ENCODE measurements at regions of chr1 and their contacts with region 1.

Region 1: DNA sequence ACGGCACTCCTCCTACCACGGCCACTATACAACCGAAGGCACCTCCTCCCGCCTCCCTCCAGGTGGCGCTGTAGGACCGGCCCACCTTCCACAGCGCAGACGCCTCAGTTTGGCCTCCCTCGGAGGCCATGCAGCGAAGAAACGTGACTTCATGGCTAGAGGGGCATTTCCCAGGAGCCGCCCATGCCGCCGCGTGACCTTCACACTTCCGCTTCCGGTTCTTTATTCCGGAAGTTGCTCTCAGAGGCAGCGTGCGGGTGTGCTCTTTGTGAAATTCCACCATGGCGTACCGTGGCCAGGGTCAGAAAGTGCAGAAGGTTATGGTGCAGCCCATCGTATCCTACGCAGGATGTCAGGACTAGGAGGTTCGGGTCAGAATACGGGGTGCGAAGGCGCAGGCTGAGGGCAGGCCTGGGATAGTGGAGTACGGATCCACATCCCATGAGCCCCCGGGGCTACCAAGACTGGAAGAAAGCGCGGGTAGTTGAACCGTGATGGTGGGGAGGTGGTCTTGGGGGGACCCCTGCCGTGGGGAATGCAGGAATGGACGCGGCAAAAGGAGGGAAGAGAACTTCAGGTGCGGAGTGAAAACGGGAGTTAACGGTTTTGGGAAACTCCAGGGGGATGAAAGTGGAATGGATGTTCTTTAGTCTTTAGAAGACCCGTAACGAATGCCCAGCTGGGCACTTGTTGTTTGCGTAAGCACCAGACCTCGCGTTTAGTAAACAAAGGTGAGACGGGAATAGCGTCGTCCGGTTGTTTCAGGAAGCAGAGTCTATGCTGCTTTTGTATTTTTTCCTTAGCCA is at the start of gene SNRPE:
- DNase-seq: peak; percentile 96
- H3K4me3 Mint-ChIP-seq: peak within 1 kb of the TSS; percentile 100
- H3K27ac Mint-ChIP-seq: peak within 1 kb of the TSS; percentile 98
- H3K4me1 Mint-ChIP-seq: peaks cover 25% of the 10 kb centered on the region
- H3K27me3 Mint-ChIP-seq: no peaks in the 10 kb centered on the region
- total RNA-seq, gene SNRPE: 250 and 270 TPM in 2 replicates

Region 2: DNA sequence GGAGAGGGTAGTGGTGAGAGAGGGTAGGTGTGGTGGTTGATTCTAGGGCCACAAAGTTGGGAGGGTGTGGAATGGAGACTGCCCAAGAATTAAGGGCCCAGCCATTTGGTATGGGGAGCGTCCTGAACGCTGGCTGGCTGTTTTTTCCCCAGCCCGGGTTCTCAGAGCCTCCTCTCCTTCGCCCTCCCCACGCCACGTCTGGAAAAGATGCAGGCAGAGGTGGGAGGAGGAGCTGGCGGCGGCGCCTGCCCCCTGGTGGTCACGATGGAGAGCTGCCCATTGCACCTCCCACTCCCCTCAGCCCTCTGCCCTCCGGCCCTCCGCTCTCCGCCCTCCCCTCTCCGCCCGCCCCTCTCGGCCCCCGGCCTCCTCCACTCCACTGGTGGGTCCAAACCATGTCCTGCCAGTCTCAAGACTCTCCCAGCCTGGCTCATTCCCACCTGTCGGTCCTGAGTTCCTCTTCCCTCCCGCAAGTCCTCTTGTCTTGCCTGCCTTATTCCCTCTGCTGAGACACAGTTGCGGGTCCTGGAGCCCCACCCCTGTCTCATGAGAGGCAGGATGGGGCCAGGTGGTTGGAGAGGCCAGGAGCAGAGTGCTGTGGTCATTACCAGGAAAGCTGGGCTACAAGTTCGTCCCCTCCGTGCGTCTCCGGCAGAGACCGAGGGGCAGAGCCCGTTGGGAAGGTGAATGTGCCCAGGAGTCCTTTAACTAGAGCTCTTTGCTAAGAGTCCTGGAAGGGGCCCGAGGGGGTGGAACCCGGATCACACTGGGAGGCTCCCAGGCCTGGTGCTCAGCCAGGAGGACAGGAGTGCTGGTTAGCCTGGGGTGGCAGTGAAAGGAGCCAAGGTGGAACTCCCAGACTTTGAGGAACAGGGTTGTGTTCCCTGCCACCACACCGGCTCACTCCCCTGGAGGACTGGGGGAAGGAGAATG is 267.6 kb after region 1 on chr1:
- intact Hi-C with region 1: loop called (anchors 1 kb)
- DNase-seq: peak; percentile 44
- H3K4me3 Mint-ChIP-seq: no peak overlapping the region
- H3K27ac Mint-ChIP-seq: peak overlapping the region; percentile 58
- H3K4me1 Mint-ChIP-seq: peaks cover 8% of the 10 kb centered on the region
- H3K27me3 Mint-ChIP-seq: peaks cover 3% of the 10 kb centered on the region

Region 3: DNA sequence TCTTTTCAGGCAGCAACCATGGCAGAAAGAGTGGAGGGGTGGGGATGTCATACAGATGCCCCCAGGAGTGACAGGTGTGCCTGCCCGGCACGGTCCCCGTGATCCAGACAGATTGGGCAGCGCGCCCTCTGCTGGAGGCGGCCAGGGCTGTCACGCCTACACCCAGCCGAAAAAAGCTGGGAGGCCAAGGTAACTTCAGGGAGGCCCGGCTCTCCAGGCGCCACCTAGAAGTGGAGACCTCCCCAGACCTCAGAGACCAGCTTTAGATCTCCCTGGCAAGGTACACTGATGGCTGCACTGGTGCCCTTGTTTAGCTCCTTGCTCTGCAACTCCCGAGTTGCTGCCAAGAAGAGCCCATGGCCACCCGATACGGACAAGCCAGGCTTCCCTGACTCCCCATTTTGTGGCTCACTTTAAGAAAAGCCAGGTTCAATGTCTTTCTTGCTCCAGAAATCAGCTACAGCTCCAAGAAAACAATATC is 345.6 kb after region 1 on chr1:
- intact Hi-C with region 1: loop called (anchors 1 kb)
- DNase-seq: peak; percentile 51
- H3K4me3 Mint-ChIP-seq: no peak overlapping the region
- H3K27ac Mint-ChIP-seq: no peak overlapping the region
- H3K4me1 Mint-ChIP-seq: peaks cover 5% of the 10 kb centered on the region
- H3K27me3 Mint-ChIP-seq: peaks cover 41% of the 10 kb centered on the region

Region 4: GRCh38 chr1:204368996-204369726 is 507.6 kb after region 1 on chr1:
- intact Hi-C with region 1: no loop called
- DNase-seq: no peak
- H3K4me3 Mint-ChIP-seq: no peak overlapping the region
- H3K27ac Mint-ChIP-seq: no peak overlapping the region
- H3K4me1 Mint-ChIP-seq: peaks cover 27% of the 10 kb centered on the region
- H3K27me3 Mint-ChIP-seq: peaks cover 16% of the 10 kb centered on the region

Region 5: DNA sequence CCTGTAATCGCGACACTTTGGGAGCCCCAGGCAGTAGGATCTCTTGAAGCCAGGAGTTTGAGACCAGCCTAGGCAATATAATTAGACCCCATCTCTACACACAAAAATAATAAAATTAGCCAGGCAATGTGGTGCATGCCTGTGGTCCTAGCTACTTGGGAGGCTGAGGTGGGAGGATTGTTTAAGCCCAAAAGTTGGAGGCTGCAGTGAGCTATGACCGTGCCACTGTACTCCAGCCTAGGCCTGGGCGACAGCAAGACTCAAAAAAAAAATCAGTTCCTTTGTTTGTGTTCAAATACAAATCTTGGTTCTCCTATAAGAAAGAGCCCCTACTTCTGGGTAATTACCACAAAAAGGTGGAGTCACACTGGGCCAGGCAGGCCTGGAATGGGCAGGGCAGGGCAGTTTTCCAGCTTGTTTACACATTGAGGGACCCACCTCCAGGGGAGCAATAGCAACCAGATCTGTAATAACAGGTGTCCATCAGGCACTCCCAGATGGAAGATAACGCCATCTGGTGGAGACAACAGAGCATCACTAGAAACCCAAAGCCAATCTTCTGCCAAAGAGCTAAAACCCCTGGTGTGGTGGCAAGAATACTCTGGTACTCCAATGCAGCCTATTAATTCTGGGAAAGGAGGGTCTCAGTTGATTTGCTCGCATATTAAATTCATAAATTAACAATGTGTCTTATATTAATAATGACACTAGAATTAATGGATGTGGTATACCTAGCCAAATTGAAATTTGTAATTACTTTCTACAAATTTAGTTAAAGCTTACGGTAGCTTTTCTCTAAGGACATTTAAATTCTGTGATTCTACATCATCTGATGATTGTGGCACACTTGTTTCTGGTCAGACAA is 536.9 kb after region 1 on chr1:
- intact Hi-C with region 1: loop called (anchors 5 kb)
- DNase-seq: peak; percentile 30
- H3K4me3 Mint-ChIP-seq: no peak overlapping the region
- H3K27ac Mint-ChIP-seq: peak overlapping the region; percentile 50
- H3K4me1 Mint-ChIP-seq: peaks cover 8% of the 10 kb centered on the region
- H3K27me3 Mint-ChIP-seq: no peaks in the 10 kb centered on the region

Region 6: DNA sequence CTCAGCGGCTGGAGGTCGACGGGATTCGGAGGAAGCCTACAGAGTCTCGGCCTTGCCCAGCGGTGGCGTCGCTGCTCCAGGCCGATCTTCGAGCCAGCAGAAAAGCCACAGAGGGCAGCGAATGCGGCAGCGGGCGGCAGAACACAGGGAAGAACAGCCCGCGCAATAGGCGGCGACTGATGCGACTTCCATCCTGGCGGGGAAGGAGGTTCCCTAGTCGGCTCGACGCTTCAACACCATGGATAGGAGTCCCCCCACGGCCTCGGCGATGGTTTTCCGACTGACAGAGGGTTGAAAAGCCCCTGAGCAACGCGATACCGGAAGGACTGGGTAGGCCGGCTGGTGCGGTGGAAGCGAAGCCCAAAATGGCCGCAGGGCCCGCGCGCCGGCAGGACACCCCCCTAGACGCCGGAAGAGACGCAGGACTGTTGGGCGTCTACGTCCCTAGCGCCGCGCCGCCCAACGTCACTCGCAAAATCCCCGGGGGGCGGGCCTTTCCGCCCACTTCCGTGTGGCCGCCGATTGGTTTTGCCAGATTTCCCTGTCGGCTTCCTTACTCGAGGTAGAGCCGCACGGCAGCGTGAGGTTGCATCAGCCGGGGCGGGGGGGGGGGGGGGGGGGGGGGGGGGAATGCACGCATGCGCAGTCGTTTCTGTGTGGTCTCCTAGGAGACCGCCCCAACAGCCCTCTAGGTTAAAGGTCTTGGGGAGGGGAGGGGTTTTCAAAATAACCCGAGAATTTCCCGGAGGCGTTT is 550.0 kb after region 1 on chr1 and contains the start of gene PPP1R15B:
- intact Hi-C with region 1: loop called (anchors 2 kb)
- DNase-seq: peak; percentile 98
- H3K4me3 Mint-ChIP-seq: peak within 1 kb of the TSS; percentile 99
- H3K27ac Mint-ChIP-seq: peak within 1 kb of the TSS; percentile 99
- H3K4me1 Mint-ChIP-seq: peaks cover 12% of the 10 kb centered on the region
- H3K27me3 Mint-ChIP-seq: no peaks in the 10 kb centered on the region
- total RNA-seq, gene PPP1R15B: 75.8 and 76.2 TPM in 2 replicates

Measured in activated T-helper 1 cell treated with anti-CD3 and anti-CD28 coated beads, Interleukin-12 subunit alpha, Interleukin-12 subunit beta, Interleukin-2, Interleukin-4 antibody, amounts not matched to agents 30 ng/mL and 10 ng/mL and 1 ng/mL, durations not matched to agents 14 hours and 24 hours and 36 hours (primary cell).